PC-9 (cell line): ENCODE measurements at regions of chr5 and their contacts with region 1.

Region 1: DNA sequence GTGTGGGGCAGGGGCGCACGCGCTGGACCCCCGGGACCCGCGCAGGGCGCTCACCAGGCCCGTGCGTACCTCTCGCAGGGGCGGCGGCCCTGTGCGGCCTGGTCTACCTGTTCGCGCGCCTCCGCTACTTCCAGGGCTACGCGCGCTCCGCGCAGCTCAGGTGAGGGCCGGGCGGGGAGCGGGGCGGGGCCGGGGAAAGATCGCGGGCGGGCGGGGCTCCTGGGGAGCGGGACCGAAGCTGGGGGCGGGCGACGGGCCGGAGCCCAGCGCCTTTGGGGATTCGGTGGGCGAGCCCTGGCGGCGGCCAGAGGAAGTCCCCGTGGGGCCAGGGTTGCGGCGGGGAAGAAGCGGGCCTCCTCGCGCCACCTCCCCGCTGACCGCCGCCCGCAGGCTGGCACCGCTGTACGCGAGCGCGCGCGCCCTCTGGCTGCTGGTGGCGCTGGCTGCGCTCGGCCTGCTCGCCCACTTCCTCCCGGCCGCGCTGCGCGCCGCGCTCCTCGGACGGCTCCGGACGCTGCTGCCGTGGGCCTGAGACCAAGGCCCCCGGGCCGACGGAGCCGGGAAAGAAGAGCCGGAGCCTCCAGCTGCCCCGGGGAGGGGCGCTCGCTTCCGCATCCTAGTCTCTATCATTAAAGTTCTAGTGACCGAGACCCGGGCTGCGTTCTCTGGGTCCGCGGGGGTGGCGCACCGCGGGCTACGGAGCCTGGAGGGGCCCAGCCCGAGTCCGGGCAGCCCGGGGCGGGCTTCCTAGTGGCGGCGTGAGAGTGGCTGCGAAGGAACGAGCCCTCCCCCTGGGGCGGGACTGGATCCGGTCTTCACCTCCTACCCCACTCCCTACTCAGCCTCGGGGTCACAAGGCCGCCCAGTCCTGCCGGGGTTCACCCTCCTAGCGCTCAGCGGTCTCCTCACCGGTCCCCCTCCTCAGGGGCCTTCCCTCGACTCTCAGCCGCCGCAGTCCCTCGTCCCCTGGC is 2.4 kb downstream of the LTC4S start:
- DNase-seq: peak; percentile 66 to 93
- H3K4me3 ChIP-seq: peak overlapping the region; percentile 86
- H3K27ac ChIP-seq: peak overlapping the region; percentile 65
- H3K4me1 ChIP-seq: peaks cover 17% of the 10 kb centered on the region
- H3K27me3 ChIP-seq: no peaks in the 10 kb centered on the region
- CTCF ChIP-seq: peak; percentile 54; the same call in 1 of the 2 replicates

Region 2: DNA sequence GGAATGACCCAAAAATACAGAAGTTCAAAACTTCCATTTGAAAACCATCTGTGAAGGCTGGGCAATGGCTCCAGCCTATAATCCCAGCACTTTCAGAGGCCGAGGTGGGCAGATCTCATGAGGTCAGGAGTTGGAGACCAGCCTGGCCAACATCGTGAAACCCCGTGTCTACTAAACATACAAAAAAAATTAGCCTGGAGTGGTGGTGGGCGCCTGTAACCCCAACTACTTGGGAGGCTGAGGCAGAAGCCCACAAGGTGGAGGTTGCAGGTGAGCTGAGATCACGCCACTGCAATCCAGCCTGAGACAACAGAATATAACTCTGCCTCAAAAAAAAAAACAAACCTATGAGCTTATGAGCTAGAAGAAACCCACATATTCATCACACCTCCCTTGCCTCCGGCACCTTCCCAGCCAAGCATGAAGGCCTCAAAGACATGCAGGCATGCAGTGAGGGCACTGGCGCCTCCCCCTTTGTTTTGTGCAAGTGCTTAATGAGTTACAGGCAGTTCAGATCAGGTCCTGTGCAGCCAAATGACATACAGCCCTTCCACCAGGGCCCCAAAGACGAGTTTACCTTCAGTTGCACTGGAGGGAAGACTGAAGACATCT is 182.6 kb before region 1 on chr5:
- CTCF ChIA-PET with region 1: no interaction called
- POLR2A ChIA-PET with region 1: interaction called, 10 read pairs
- intact Hi-C with region 1: no loop called
- DNase-seq: no peak
- H3K4me3 ChIP-seq: no peak overlapping the region
- H3K27ac ChIP-seq: no peak overlapping the region
- H3K4me1 ChIP-seq: no peaks in the 10 kb centered on the region; the same call in 1 of the 2 replicates
- H3K27me3 ChIP-seq: no peaks in the 10 kb centered on the region
- CTCF ChIP-seq: no peak

Region 3: GRCh38 chr5:179623003-179623880 is 172.9 kb before region 1 on chr5 and contains the start of gene HNRNPH1:
- CTCF ChIA-PET with region 1: no interaction called
- POLR2A ChIA-PET with region 1: no interaction called
- intact Hi-C with region 1: loop called (anchors 5 kb)
- DNase-seq: peak; percentile 93 to 99
- H3K4me3 ChIP-seq: peak within 1 kb of the TSS; percentile 95
- H3K27ac ChIP-seq: peak within 1 kb of the TSS; percentile 94
- H3K4me1 ChIP-seq: peaks cover 36% of the 10 kb centered on the region
- H3K27me3 ChIP-seq: no peaks in the 10 kb centered on the region
- CTCF ChIP-seq: 0 out of 2 replicates have a peak, but pooled peaks have one; percentile 28
- total RNA-seq, gene HNRNPH1: 626 and 723 TPM in 2 replicates

Region 4: DNA sequence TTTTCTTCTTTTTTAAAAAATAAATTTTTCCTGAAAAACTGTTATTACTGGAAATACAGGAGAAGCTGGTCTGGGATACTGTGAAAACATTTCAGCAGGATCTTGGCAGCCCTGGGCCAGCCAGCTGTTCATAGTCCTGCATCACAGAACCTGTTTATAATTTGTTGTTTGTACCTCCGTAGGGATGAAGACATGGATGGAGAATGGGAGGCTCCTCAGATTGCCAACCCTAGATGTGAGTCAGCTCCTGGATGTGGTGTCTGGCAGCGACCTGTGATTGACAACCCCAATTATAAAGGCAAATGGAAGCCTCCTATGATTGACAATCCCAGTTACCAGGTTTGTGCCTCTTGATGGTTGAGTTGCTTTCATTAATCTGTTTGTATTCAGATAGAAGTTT is 75.9 kb before region 1 on chr5:
- CTCF ChIA-PET with region 1: no interaction called
- POLR2A ChIA-PET with region 1: interaction called, 11 read pairs
- intact Hi-C with region 1: no loop called
- DNase-seq: no peak
- H3K4me3 ChIP-seq: no peak overlapping the region
- H3K27ac ChIP-seq: no peak overlapping the region
- H3K4me1 ChIP-seq: no peaks in the 10 kb centered on the region
- H3K27me3 ChIP-seq: no peaks in the 10 kb centered on the region
- CTCF ChIP-seq: no peak

Region 5: GRCh38 chr5:179763215-179763945 is 32.8 kb before region 1 on chr5:
- CTCF ChIA-PET with region 1: no interaction called
- POLR2A ChIA-PET with region 1: no interaction called
- intact Hi-C with region 1: loop called (anchors 1 kb)
- DNase-seq: peak; percentile 74
- H3K4me3 ChIP-seq: no peak overlapping the region
- H3K27ac ChIP-seq: peak overlapping the region; percentile 52
- H3K4me1 ChIP-seq: peaks cover 47% of the 10 kb centered on the region
- H3K27me3 ChIP-seq: no peaks in the 10 kb centered on the region
- CTCF ChIP-seq: peak; percentile 91

Region 6: GRCh38 chr5:179806250-179807222 is 10.4 kb after region 1 on chr5 and contains the start of gene MGAT4B:
- CTCF ChIA-PET with region 1: interaction called, 8 read pairs
- POLR2A ChIA-PET with region 1: no interaction called
- intact Hi-C with region 1: loop called (anchors 1 kb)
- DNase-seq: peak in 1 of 2 experiments; percentile 83
- H3K4me3 ChIP-seq: peak within 1 kb of the TSS; percentile 98
- H3K27ac ChIP-seq: peak within 1 kb of the TSS; percentile 53
- H3K4me1 ChIP-seq: peaks cover 40% of the 10 kb centered on the region
- H3K27me3 ChIP-seq: no peaks in the 10 kb centered on the region
- CTCF ChIP-seq: no peak
- total RNA-seq, gene MGAT4B: 337 and 413 TPM in 2 replicates

Region 7: DNA sequence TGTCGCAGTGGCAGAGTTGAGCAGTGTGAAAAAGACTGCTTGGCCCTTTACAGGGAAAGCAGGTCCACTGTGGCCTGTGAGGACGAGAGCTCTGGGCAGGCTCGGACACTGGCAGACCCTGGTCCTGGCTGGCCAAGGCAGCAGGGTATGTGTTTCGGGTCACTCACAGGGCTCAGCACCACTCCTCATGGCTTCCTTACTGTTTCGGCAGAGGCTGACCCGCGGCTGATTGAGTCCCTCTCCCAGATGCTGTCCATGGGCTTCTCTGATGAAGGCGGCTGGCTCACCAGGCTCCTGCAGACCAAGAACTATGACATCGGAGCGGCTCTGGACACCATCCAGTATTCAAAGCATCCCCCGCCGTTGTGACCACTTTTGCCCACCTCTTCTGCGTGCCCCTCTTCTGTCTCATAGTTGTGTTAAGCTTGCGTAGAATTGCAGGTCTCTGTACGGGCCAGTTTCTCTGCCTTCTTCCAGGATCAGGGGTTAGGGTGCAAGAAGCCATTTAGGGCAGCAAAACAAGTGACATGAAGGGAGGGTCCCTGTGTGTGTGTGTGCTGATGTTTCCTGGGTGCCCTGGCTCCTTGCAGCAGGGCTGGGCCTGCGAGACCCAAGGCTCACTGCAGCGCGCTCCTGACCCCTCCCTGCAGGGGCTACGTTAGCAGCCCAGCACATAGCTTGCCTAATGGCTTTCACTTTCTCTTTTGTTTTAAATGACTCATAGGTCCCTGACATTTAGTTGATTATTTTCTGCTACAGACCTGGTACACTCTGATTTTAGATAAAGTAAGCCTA is 40.3 kb after region 1 on chr5:
- CTCF ChIA-PET with region 1: no interaction called
- POLR2A ChIA-PET with region 1: no interaction called
- intact Hi-C with region 1: loop called (anchors 5 kb)
- DNase-seq: peak in 1 of 2 experiments; percentile 49
- H3K4me3 ChIP-seq: no peak overlapping the region
- H3K27ac ChIP-seq: 0 out of 2 replicates have a peak overlapping the region, but pooled peaks have one; percentile 17
- H3K4me1 ChIP-seq: no peaks in the 10 kb centered on the region
- H3K27me3 ChIP-seq: no peaks in the 10 kb centered on the region
- CTCF ChIP-seq: no peak

Region 8: DNA sequence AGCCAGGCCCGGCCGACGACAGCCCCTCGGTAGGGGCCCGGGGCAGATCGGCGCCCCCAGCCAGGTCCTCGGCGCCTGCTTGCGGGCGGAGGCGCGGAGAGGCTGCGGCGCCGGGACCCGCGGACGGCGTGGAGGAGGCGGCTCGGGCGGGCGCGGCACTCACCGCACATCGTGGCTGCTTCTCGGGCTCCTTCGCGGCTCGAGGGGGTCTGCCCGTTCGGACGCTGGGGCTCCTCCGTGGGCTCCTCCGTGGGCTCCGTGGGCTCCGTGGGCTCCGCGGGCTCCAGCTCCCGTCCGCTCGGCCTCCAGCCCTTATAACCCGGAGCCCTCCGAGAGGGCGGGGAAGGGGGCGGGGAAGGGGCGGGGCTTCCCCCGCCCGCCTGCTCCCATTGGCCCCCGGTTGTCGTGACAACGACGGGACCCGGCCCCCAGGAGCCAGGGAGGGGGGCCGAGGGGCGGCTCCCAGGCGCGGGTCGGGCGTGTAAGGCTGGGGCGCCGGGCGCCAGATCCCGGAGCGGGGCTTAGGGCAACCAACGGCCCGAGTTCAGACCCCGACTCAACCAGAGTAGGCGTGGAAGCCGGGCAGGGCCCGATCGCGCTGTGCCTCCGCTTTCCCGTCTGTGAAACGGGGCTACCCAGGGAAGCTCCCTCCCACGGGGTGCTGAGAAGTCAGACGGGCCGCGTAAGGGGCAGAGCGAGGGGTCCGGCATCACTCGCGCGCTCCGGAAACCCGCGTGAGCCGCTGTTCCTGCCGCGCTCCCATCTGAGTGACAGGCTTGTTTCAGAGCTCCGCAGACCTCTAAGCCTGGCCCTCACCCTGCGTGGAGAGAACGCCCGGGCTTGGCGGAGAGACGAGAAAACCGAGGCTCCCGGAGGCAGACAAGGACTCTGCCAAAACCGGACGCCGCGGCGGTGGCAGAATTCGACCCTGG is 557.2 kb after region 1 on chr5 and contains the start of gene GFPT2:
- CTCF ChIA-PET with region 1: no interaction called
- POLR2A ChIA-PET with region 1: no interaction called
- intact Hi-C with region 1: no loop called
- DNase-seq: peak; percentile 58 to 86
- H3K4me3 ChIP-seq: peak within 1 kb of the TSS; percentile 88
- H3K27ac ChIP-seq: no peak within 1 kb of the TSS
- H3K4me1 ChIP-seq: no peaks in the 10 kb centered on the region; the same call in 1 of the 2 replicates
- H3K27me3 ChIP-seq: no peaks in the 10 kb centered on the region
- CTCF ChIP-seq: no peak
- total RNA-seq, gene GFPT2: 22.5 and 24.4 TPM in 2 replicates